ENCODE measurements at regions of chr22 and their contacts with region 1.

Region 1: GRCh38 chr22:46250035-46250782 is at the start of gene CDPF1:
- DNase-seq: peak; percentile 93
- H3K4me3 Mint-ChIP-seq: peak within 1 kb of the TSS; percentile 68
- H3K27ac Mint-ChIP-seq: peak within 1 kb of the TSS; percentile 44
- H3K4me1 Mint-ChIP-seq: peaks cover 34% of the 10 kb centered on the region
- H3K27me3 Mint-ChIP-seq: no peaks in the 10 kb centered on the region
- total RNA-seq, gene CDPF1: 6.8 to 8.2 TPM

Region 2: DNA sequence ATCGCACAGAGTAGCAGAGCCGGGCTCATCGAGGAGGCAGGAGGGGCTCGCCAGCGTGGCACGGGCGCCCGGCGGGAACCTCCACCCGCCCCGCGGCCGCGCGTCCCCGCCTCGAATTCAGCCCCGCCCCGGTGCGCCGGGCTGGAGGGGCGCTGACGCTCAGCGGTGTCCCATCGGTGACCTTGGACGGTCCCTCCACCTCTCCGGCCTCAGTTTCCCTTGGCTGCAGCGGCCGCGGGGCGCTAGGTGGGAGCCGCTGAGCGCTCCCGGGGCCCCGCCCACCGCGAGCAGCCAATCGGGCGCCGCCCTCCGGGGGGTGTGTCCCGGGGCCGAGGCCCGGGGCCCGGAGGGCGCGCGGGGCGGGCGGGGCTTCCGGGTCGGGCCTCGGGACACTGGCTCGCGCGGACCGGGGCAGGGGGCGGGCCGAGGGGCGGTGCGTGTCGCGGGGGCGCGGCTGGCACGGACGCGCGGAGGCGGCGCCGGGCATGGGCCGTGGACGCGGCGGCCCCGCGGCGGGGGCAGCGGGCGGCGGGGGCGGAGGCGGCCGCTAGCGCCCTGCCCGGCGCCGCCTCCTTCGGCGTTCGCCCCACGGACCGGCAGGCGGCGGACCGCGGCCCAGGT is 100.1 kb before region 1 on chr22 and contains the start of gene PPARA:
- CTCF ChIA-PET with region 1: interaction called, 13 read pairs
- POLR2A ChIA-PET with region 1: interaction called, 6 read pairs
- intact Hi-C with region 1: loop called (anchors 2 kb)
- DNase-seq: peak; percentile 87
- H3K4me3 Mint-ChIP-seq: peak within 1 kb of the TSS; percentile 74
- H3K27ac Mint-ChIP-seq: no peak within 1 kb of the TSS
- H3K4me1 Mint-ChIP-seq: peaks cover 16% of the 10 kb centered on the region
- H3K27me3 Mint-ChIP-seq: peaks cover 6% of the 10 kb centered on the region
- total RNA-seq, gene PPARA: 11.1 to 13.3 TPM

Region 3: DNA sequence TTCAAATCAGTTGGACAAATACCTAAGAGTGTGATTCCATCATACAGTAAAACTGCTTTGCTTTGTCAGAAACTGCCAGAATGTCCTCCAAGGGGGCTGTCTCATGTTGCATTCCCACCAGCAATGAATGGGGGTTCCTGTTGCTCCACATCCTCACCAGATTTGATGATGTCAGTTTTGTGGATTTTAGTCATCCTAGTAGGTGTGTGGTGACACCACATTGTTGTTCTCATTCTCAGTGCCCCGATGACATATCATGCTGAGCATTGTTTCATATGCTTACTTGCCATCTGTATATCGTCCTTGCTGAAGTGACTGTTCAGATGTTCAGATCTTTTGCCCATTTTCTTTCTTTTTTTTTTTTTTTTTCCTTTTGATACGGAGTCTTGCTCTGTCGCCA is 37.2 kb before region 1 on chr22:
- CTCF ChIA-PET with region 1: no interaction called
- POLR2A ChIA-PET with region 1: no interaction called
- intact Hi-C with region 1: loop called (anchors 2 kb)
- DNase-seq: peak; percentile 40
- H3K4me3 Mint-ChIP-seq: no peak overlapping the region
- H3K27ac Mint-ChIP-seq: no peak overlapping the region
- H3K4me1 Mint-ChIP-seq: peaks cover 12% of the 10 kb centered on the region
- H3K27me3 Mint-ChIP-seq: no peaks in the 10 kb centered on the region

Region 4: DNA sequence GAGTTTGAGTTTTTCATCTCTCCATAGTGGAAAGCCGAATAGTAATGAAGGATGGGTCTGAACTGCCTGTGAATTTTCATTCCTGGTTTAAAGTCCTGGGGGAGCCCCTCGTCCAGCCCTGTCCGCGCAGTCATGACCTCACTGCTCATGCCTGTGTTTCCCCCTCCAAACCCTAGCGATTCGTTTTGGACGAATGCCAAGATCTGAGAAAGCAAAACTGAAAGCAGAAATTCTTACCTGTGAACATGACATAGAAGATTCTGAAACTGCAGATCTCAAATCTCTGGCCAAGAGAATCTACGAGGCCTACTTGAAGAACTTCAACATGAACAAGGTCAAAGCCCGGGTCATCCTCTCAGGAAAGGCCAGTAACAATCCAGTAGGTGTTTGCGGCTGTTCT is 30.6 kb before region 1 on chr22:
- CTCF ChIA-PET with region 1: no interaction called
- POLR2A ChIA-PET with region 1: interaction called, 3 read pairs
- intact Hi-C with region 1: loop called (anchors 2 kb)
- DNase-seq: peak; percentile 18
- H3K4me3 Mint-ChIP-seq: no peak overlapping the region
- H3K27ac Mint-ChIP-seq: no peak overlapping the region
- H3K4me1 Mint-ChIP-seq: peaks cover 15% of the 10 kb centered on the region
- H3K27me3 Mint-ChIP-seq: no peaks in the 10 kb centered on the region

Measured in activated CD4-positive, alpha-beta memory T cell treated with anti-CD3 and anti-CD28 coated beads for 36 hours (primary cell).